Mammary epithelial cell (primary cell): ENCODE measurements at regions of chr10 and their contacts with region 1.

Region 1: GRCh38 chr10:13422566-13423199 is 74.6 kb upstream of the SEPHS1 start:
- DNase-seq: no peak
- H3K4me3 ChIP-seq: no peak overlapping the region
- H3K27ac ChIP-seq: no peak overlapping the region
- H3K4me1 ChIP-seq: peaks cover 4% of the 10 kb centered on the region
- H3K27me3 ChIP-seq: peaks cover 5% of the 10 kb centered on the region
- CTCF ChIP-seq: no peak

Region 2: GRCh38 chr10:13382703-13383398 is 39.8 kb before region 1 on chr10:
- CTCF ChIA-PET with region 1: no interaction called
- dilution Hi-C with region 1: loop called (anchors 5 kb)
- in situ Hi-C with region 1: loop called in 1 of 2 experiments (anchors 5 kb)
- intact Hi-C with region 1: no loop called
- DNase-seq: peak; percentile 35
- H3K4me3 ChIP-seq: peak overlapping the region; percentile 29 to 50 (median 40)
- H3K27ac ChIP-seq: no peak overlapping the region
- H3K4me1 ChIP-seq: peaks cover 17% of the 10 kb centered on the region
- H3K27me3 ChIP-seq: no peaks in the 10 kb centered on the region
- CTCF ChIP-seq: no peak

Region 3: DNA sequence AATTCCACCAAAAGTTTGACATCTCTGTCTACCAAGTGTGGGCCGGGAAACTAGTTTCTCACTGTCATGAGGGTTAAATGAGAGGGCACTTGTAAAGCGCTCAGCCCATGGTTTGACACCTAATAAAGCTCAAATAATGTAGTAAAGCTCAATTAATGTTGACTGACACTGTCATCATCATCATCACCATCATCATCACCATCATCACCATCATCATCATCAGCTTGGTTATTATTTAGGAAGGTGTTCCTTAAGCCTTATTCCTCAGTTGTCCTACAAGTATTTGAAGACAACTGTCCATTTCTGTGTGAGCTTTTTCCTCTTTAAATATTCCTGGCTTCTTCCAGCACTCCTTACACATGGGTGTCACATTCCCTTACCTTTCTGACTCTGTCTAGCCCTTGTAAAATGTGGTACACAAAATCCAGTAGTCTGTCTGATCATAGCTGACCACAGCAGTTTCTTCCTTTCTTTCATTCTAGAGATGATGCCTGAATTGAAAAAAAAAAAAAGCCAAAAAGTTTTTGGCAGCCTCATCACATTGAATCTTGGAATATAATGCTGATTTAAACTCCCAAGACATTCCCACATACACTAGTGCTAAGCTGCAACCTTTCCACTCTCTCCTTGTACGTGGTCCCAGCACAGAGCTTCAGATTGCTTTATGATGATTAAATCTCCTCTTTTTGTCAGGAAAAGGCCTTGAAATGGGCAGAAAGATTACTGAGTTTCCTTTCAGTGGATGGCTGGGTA is 34.0 kb before region 1 on chr10:
- CTCF ChIA-PET with region 1: no interaction called
- dilution Hi-C with region 1: loop called (anchors 5 kb)
- in situ Hi-C with region 1: loop called in 1 of 2 experiments (anchors 5 kb)
- intact Hi-C with region 1: no loop called
- DNase-seq: no peak
- H3K4me3 ChIP-seq: no peak overlapping the region
- H3K27ac ChIP-seq: no peak overlapping the region
- H3K4me1 ChIP-seq: peaks cover 5% of the 10 kb centered on the region
- H3K27me3 ChIP-seq: no peaks in the 10 kb centered on the region
- CTCF ChIP-seq: no peak

Region 4: GRCh38 chr10:13475124-13475523 is 52.4 kb after region 1 on chr10:
- CTCF ChIA-PET with region 1: no interaction called
- dilution Hi-C with region 1: loop called (anchors 5 kb)
- in situ Hi-C with region 1: no loop called
- intact Hi-C with region 1: no loop called
- DNase-seq: peak; percentile 49
- H3K4me3 ChIP-seq: no peak overlapping the region
- H3K27ac ChIP-seq: no peak overlapping the region
- H3K4me1 ChIP-seq: peaks cover 10% of the 10 kb centered on the region
- H3K27me3 ChIP-seq: no peaks in the 10 kb centered on the region
- CTCF ChIP-seq: no peak

Region 5: GRCh38 chr10:13485623-13486022 is 62.9 kb after region 1 on chr10:
- CTCF ChIA-PET with region 1: no interaction called
- dilution Hi-C with region 1: no loop called
- in situ Hi-C with region 1: no loop called
- intact Hi-C with region 1: no loop called
- DNase-seq: no peak
- H3K4me3 ChIP-seq: no peak overlapping the region
- H3K27ac ChIP-seq: no peak overlapping the region
- H3K4me1 ChIP-seq: no peaks in the 10 kb centered on the region
- H3K27me3 ChIP-seq: no peaks in the 10 kb centered on the region
- CTCF ChIP-seq: peak; percentile 31 to 49